ENCODE measurements at regions of chr11 and their contacts with region 1.

Region 1: GRCh38 chr11:68010090-68011041 is at the start of gene ALDH3B1:
- DNase-seq: peak; percentile 51
- ATAC-seq: peak; percentile 76
- H3K4me3 ChIP-seq: peak within 1 kb of the TSS in 4 of 5 experiments; percentile 0 to 41 (median 24)
- H3K4me3 Mint-ChIP-seq: peak within 1 kb of the TSS; percentile 76
- H3K27ac ChIP-seq: peak within 1 kb of the TSS; percentile 25 to 53
- H3K27ac Mint-ChIP-seq: peak within 1 kb of the TSS; percentile 86
- H3K4me1 ChIP-seq: peaks cover 45 to 59% of the 10 kb centered on the region in 2 donors
- H3K4me1 Mint-ChIP-seq: peaks cover 44% of the 10 kb centered on the region
- H3K27me3 ChIP-seq: no peaks in the 10 kb centered on the region
- H3K27me3 Mint-ChIP-seq: no peaks in the 10 kb centered on the region
- CTCF ChIP-seq: no peak
- total RNA-seq, gene ALDH3B1: 0.39 and 0.81 TPM in 2 replicates

Region 2: GRCh38 chr11:67996622-67997474 is 13.5 kb before region 1 on chr11:
- CTCF ChIA-PET with region 1: interaction called, 11 read pairs
- POLR2A ChIA-PET with region 1: no interaction called
- intact Hi-C with region 1: no loop called
- DNase-seq: peak; percentile 42
- ATAC-seq: peak; percentile 65
- H3K4me3 ChIP-seq: no peak overlapping the region
- H3K4me3 Mint-ChIP-seq: no peak overlapping the region
- H3K27ac ChIP-seq: no peak overlapping the region
- H3K27ac Mint-ChIP-seq: peak overlapping the region; percentile 83
- H3K4me1 ChIP-seq: peaks cover 50 to 79% of the 10 kb centered on the region in 2 donors
- H3K4me1 Mint-ChIP-seq: peaks cover 51% of the 10 kb centered on the region
- H3K27me3 ChIP-seq: no peaks in the 10 kb centered on the region
- H3K27me3 Mint-ChIP-seq: no peaks in the 10 kb centered on the region
- CTCF ChIP-seq: no peak